ENCODE measurements at regions of chr16 and their contacts with region 1.

Region 1: DNA sequence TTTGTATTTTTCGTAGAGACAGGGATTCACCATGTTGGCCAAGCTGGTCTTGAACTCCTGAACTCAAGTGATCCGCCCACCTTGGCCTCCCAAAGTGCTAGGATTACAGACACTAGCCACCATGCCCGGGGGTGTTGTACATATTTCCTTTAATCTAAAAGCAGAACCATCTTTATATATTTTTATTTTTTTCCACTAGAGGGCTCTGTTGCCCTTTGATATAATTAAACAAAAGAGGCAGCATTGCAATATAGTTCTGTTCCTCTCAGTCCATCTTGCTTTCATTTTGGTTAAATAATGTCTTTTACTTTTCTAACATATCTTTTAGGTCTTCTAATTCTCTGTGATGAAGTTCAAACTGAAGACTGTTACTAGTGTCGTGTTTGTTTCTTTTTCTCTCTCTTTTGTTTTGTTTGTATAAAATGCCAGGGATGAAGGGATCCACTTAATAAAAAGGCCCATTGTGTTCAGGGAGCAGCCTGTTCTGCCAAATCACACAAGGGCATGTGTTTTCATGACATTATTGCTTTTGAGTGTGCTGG is 23.4 kb downstream of the WWOX start:
- DNase-seq: peak; percentile 62
- H3K4me3 Mint-ChIP-seq: no peak overlapping the region
- H3K27ac Mint-ChIP-seq: no peak overlapping the region
- H3K4me1 Mint-ChIP-seq: peaks cover 2% of the 10 kb centered on the region
- H3K27me3 Mint-ChIP-seq: no peaks in the 10 kb centered on the region

Region 2: DNA sequence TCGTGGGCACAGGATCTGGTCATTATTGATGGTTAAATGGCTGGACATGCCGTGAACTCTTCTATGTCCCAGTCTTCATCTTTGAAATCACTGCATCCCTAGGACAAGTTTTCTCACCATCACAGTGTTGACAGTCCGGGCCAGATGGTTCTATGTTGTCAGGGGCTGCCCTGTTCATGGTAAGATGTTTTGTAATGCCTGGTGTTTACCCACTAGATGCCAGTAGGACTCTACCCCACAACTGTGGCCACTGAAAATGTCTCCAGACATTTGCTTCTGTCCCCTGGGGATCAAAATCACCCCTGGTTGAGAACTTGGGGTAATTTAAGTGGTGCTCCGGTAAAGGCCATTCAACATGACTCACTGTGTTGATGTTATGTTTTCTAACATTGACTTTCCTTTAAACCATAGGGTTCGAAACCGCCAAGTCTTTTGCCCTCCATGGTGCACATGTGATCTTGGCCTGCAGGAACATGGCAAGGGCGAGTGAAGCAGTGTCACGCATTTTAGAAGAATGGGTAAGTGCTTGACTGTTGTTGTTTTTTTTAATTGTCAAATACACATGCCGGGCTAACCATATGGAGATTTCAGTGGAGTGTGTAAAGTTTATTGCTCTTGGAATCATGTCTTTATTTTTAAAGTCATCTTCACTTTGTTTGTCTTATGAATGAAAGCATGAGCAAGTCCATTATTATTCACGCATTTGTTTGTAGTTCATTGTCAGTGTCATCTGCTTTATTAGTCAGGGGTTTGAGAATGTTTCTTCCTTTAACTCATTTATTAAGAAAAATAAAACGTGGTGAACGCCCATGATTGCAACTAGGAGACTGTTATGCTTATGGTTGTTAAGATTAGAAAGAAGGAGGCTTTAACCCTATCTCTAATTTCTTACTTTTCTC is 41.2 kb after region 1 on chr16:
- intact Hi-C with region 1: no loop called
- DNase-seq: no peak
- H3K4me3 Mint-ChIP-seq: no peak overlapping the region
- H3K27ac Mint-ChIP-seq: no peak overlapping the region
- H3K4me1 Mint-ChIP-seq: no peaks in the 10 kb centered on the region
- H3K27me3 Mint-ChIP-seq: no peaks in the 10 kb centered on the region

Region 3: GRCh38 chr16:78235168-78235800 is 112.4 kb after region 1 on chr16:
- intact Hi-C with region 1: loop called (anchors 1 kb)
- DNase-seq: peak; percentile 90
- H3K4me3 Mint-ChIP-seq: no peak overlapping the region
- H3K27ac Mint-ChIP-seq: no peak overlapping the region
- H3K4me1 Mint-ChIP-seq: peaks cover 2% of the 10 kb centered on the region
- H3K27me3 Mint-ChIP-seq: no peaks in the 10 kb centered on the region

Measured in activated CD4-positive, alpha-beta T cell treated with anti-CD3 and anti-CD28 coated beads, Interleukin-2, amount 10 ng/mL, durations not matched to agents 24 days and 14 days (primary cell).